ENCODE measurements at regions of chr20 and their contacts with region 1.

Region 1: GRCh38 chr20:62302341-62303058 is at the start of gene ADRM1:
- DNase-seq: peak; percentile 94
- ATAC-seq: peak; percentile 85
- H3K4me3 ChIP-seq: peak within 1 kb of the TSS; percentile 99
- H3K27ac ChIP-seq: peak within 1 kb of the TSS; percentile 91
- H3K4me1 ChIP-seq: peaks cover 12% of the 10 kb centered on the region
- H3K27me3 ChIP-seq: no peaks in the 10 kb centered on the region
- CTCF ChIP-seq: peak; percentile 96
- POLR2A ChIP-seq: peak; percentile 74; the same call in 1 of the 2 replicates
- RAD21 ChIP-seq: peak; percentile 67
- total RNA-seq, gene ADRM1: 96.9 and 103 TPM in 2 replicates

Region 2: GRCh38 chr20:62374331-62375152 is 72.0 kb after region 1 on chr20:
- CTCF ChIA-PET with region 1: interaction called, 6 read pairs
- POLR2A ChIA-PET with region 1: no interaction called
- dilution Hi-C with region 1: loop called (anchors 25 kb)
- in situ Hi-C with region 1: no loop called
- intact Hi-C with region 1: loop called (anchors 2 kb)
- DNase-seq: peak; percentile 34
- ATAC-seq: peak; percentile 50
- H3K4me3 ChIP-seq: no peak overlapping the region
- H3K27ac ChIP-seq: peak overlapping the region; percentile 50
- H3K4me1 ChIP-seq: peaks cover 37% of the 10 kb centered on the region
- H3K27me3 ChIP-seq: no peaks in the 10 kb centered on the region
- CTCF ChIP-seq: no peak
- POLR2A ChIP-seq: no peak
- RAD21 ChIP-seq: no peak

Region 3: DNA sequence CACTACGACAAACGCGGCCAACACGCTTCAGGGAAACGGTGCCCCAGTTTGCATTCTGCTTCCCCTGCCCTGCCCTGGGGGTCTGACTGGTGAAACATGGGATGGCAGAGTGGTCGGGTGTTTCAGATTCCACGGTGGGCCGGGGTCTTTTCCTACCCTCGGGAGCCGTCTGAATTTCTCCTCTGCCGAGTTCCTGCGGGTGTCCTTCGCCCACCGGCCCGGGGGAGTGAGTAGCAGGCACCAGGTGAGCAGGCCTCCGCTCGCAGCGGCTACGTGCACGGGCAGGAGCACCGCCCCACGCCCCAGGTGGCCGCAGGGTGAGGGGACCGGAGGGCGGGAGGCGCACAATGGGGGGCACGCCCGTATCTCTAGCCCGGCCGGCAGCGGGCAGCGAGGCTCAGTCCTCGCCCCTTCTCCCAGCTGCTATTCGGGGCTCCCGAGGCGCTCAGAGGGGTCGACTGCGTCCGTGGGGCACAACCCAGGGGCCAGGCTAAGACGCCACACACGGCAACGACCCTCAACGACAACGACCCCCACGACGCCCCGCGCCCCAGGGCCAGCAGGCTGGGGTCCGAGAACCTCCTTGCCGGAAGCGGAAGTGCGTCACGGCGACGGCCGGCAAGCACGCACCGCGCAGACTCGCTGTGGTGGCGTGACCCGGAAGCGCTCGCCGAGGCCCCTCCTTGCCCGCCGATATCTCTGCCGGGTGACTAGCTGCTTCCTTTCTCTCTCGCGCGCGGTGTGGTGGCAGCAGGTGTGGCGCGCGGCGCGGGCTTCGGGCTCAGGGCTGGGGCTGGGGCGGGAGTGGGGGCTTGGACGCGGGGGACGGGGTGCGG is 84.1 kb after region 1 on chr20 and contains the start of gene RPS21:
- CTCF ChIA-PET with region 1: interaction called, 10 read pairs
- POLR2A ChIA-PET with region 1: interaction called, 5 read pairs
- dilution Hi-C with region 1: loop called (anchors 25 kb)
- in situ Hi-C with region 1: loop called (anchors 5 kb)
- intact Hi-C with region 1: loop called (anchors 1 kb)
- DNase-seq: peak; percentile 89
- ATAC-seq: peak; percentile 79
- H3K4me3 ChIP-seq: peak within 1 kb of the TSS; percentile 92
- H3K27ac ChIP-seq: peak within 1 kb of the TSS; percentile 96
- H3K4me1 ChIP-seq: peaks cover 5% of the 10 kb centered on the region
- H3K27me3 ChIP-seq: no peaks in the 10 kb centered on the region
- CTCF ChIP-seq: no peak
- POLR2A ChIP-seq: peak; percentile 84
- RAD21 ChIP-seq: no peak
- total RNA-seq, gene RPS21: 2,710 and 3,846 TPM in 2 replicates

Region 4: GRCh38 chr20:62409931-62410745 is 107.6 kb after region 1 on chr20:
- CTCF ChIA-PET with region 1: no interaction called
- POLR2A ChIA-PET with region 1: no interaction called
- dilution Hi-C with region 1: no loop called
- in situ Hi-C with region 1: no loop called
- intact Hi-C with region 1: loop called (anchors 1 kb)
- DNase-seq: no peak
- ATAC-seq: no peak
- H3K4me3 ChIP-seq: no peak overlapping the region
- H3K27ac ChIP-seq: no peak overlapping the region
- H3K4me1 ChIP-seq: peaks cover 6% of the 10 kb centered on the region; the same call in 1 of the 2 replicates
- H3K27me3 ChIP-seq: peaks cover 8% of the 10 kb centered on the region; the same call in 1 of the 2 replicates
- CTCF ChIP-seq: peak; percentile 52
- POLR2A ChIP-seq: no peak
- RAD21 ChIP-seq: peak; percentile 51

Region 5: DNA sequence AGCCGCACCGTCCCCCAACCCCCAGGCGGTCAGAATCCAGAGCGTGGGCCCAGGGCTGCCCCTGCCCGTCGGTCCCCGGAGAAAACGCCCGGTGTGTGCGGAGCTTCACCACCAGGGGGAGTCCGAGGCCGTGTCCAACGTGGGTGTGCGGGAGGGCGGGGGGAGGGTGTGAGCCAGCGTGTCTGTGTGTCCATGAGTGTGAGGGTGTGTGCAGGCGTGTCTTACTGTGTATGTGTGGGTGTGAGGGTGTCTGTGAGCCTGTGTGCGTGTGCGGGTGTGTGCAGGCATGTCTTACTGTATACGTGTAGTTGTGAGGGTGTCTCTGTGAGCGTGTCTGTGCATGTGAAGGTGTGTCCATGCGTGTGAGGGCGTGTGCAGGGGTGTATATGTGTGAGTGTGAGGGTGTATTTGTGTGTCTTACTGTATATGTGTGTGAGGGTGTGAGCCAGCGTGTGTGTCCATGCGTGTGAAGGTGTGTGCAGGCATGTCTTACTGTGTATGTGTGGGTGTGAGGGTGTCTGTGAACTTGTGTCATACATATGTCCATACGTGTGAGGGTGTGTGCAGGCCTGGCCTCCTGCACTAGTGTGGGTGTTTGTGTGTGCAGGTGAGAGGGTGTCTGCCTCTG is 197.9 kb after region 1 on chr20:
- CTCF ChIA-PET with region 1: no interaction called
- POLR2A ChIA-PET with region 1: no interaction called
- dilution Hi-C with region 1: no loop called
- in situ Hi-C with region 1: no loop called
- intact Hi-C with region 1: loop called (anchors 10 kb)
- DNase-seq: peak; percentile 20
- ATAC-seq: peak; percentile 93
- H3K4me3 ChIP-seq: no peak overlapping the region
- H3K27ac ChIP-seq: no peak overlapping the region
- H3K4me1 ChIP-seq: no peaks in the 10 kb centered on the region
- H3K27me3 ChIP-seq: peaks cover 18% of the 10 kb centered on the region; the same call in 1 of the 2 replicates
- CTCF ChIP-seq: peak; percentile 72
- POLR2A ChIP-seq: no peak
- RAD21 ChIP-seq: peak; percentile 63